ENCODE measurements at regions of chr12 and their contacts with region 1.

Region 1: GRCh38 chr12:111405149-111405860 is 418 bp upstream of the SH2B3 start:
- DNase-seq: peak; percentile 96 to 99 (median 99)
- H3K4me3 ChIP-seq: peak overlapping the region; percentile 41 to 91 (median 48)
- H3K4me3 Mint-ChIP-seq: peak overlapping the region; percentile 84 to 85
- H3K27ac ChIP-seq: peak overlapping the region; percentile 92 to 93
- H3K27ac Mint-ChIP-seq: peak overlapping the region; percentile 91 to 100 (median 97)
- H3K4me1 ChIP-seq: peaks cover 58 to 68% of the 10 kb centered on the region in 2 donors
- H3K4me1 Mint-ChIP-seq: peaks cover 56% of the 10 kb centered on the region
- H3K27me3 ChIP-seq: no peaks in the 10 kb centered on the region
- H3K27me3 Mint-ChIP-seq: peaks cover 0 to 8% (median 0%) of the 10 kb centered on the region in 3 donors
- CTCF ChIP-seq: peak; percentile 75

Region 2: DNA sequence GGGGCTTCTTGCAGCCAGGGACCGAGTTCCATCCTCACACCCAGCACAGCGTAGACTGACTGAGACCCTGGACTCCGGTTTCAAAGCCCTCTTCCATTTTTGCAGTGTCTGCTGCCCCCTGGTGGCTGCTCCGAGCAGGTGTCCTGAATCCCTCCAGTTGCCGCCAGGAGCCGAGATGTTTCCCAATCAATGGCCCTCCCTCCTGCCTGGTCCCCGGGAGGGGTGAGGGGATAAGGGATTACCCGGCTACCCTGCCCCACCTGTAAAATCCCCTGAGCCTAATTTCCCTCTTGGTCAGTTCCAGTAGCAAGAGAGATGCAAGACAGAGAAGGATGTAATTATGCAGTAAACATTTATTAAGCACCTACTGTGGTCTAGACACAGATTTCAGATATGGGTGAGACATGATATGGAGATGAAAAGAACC is 91.5 kb before region 1 on chr12:
- intact Hi-C with region 1: loop called in 1 of 2 experiments (anchors 10 kb)
- DNase-seq: peak; percentile 65 to 82 (median 66)
- H3K4me3 ChIP-seq: no peak overlapping the region
- H3K4me3 Mint-ChIP-seq: peak overlapping the region; percentile 27 to 68
- H3K27ac ChIP-seq: no peak overlapping the region
- H3K27ac Mint-ChIP-seq: peak overlapping the region; percentile 23 to 95 (median 91)
- H3K4me1 ChIP-seq: peaks cover 46 to 53% of the 10 kb centered on the region in 2 donors
- H3K4me1 Mint-ChIP-seq: peaks cover 58% of the 10 kb centered on the region
- H3K27me3 ChIP-seq: no peaks in the 10 kb centered on the region
- H3K27me3 Mint-ChIP-seq: peaks cover 0 to 6% (median 3%) of the 10 kb centered on the region in 3 donors
- CTCF ChIP-seq: peak; percentile 99

Region 3: GRCh38 chr12:111430433-111431353 is 25.4 kb after region 1 on chr12:
- intact Hi-C with region 1: loop called (anchors 2 kb)
- DNase-seq: peak; percentile 30 to 74 (median 58)
- H3K4me3 ChIP-seq: peak overlapping the region in 2 of 3 experiments; percentile 7 to 56
- H3K4me3 Mint-ChIP-seq: peak overlapping the region; percentile 66 to 86
- H3K27ac ChIP-seq: peak overlapping the region; percentile 80 to 90
- H3K27ac Mint-ChIP-seq: peak overlapping the region; percentile 87 to 96 (median 93)
- H3K4me1 ChIP-seq: peaks cover 100% of the 10 kb centered on the region in 2 donors
- H3K4me1 Mint-ChIP-seq: peaks cover 99% of the 10 kb centered on the region
- H3K27me3 ChIP-seq: no peaks in the 10 kb centered on the region
- H3K27me3 Mint-ChIP-seq: peaks cover 0 to 2% (median 0%) of the 10 kb centered on the region in 3 donors
- CTCF ChIP-seq: no peak

Region 4: DNA sequence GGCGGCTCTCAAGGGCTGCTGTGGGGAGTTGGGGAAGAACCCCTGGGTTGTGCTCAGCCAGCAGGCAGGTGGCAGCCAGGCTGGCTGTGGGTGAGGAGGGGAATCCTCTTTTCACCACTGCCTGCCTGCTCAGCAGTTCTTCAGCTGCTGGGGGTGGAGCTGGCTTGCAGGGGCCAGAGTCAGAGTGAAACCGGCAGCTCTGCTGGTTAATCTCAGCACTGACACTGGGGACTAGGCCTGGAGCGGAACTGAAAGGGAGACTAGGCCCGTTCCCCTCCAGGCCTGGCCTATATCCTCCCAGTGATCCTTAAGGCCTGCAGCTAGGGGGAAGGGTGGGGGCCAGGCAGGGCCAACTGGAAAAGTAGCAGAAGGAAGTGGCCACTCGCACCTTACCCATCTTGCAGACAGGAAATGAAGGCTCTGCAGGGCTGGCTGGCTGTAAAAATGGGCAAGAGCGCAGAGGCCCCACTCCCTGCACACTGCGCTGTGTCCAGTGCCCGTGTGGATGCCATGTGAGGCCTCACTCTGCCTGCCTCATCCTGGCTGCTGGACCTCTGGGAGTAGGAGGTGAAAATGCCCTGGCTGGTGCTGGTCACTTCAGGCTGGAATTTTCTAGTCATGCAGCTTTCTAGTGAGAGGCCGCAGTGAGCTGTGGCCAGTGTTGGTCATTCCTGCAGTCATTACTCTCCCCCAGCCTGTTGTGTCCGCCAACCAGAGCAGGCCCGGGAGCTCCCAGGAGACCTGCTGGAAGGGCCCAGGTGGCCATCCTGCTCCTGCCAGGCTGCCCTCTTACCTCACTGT is 39.8 kb after region 1 on chr12:
- intact Hi-C with region 1: loop called (anchors 5 kb)
- DNase-seq: peak; percentile 84 to 90 (median 84)
- H3K4me3 ChIP-seq: peak overlapping the region in 1 of 3 experiments; percentile 44
- H3K4me3 Mint-ChIP-seq: peak overlapping the region; percentile 58 to 65
- H3K27ac ChIP-seq: peak overlapping the region; percentile 75 to 88
- H3K27ac Mint-ChIP-seq: peak overlapping the region; percentile 87 to 96 (median 94)
- H3K4me1 ChIP-seq: peaks cover 74 to 80% of the 10 kb centered on the region in 2 donors
- H3K4me1 Mint-ChIP-seq: peaks cover 86% of the 10 kb centered on the region
- H3K27me3 ChIP-seq: no peaks in the 10 kb centered on the region
- H3K27me3 Mint-ChIP-seq: peaks cover 0 to 3% (median 0%) of the 10 kb centered on the region in 3 donors
- CTCF ChIP-seq: peak; percentile 20

Region 5: DNA sequence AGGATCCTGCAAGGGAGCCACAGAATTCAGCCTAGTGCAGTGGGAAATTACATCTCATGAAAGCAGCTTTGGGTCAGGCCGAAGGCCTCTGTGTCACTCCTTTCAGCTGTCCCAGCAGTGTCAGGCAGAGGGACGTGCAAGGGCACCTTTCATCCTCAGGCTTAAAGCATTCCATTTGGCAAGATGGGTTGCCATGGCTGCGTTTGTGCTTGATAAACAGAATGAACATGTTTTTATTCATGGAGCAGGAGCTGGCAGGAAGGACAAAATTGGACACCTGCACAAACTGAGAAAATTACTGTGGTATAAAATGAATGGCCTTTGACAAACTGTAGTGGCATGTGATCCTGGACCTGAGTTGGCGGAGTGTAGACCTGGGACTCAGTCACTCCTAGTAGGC is 310.0 kb after region 1 on chr12:
- intact Hi-C with region 1: no loop called
- DNase-seq: no peak
- H3K4me3 ChIP-seq: no peak overlapping the region
- H3K4me3 Mint-ChIP-seq: no peak overlapping the region
- H3K27ac ChIP-seq: no peak overlapping the region
- H3K27ac Mint-ChIP-seq: peak overlapping the region in 2 of 7 donors; percentile 33 to 68
- H3K4me1 ChIP-seq: no peaks in the 10 kb centered on the region
- H3K4me1 Mint-ChIP-seq: no peaks in the 10 kb centered on the region
- H3K27me3 ChIP-seq: no peaks in the 10 kb centered on the region
- H3K27me3 Mint-ChIP-seq: no peaks in the 10 kb centered on the region
- CTCF ChIP-seq: no peak

Measured in CD14-positive monocyte (primary cell).